Panc1 (cell line): ENCODE measurements at regions of chr4 and their contacts with region 1.

Region 1: DNA sequence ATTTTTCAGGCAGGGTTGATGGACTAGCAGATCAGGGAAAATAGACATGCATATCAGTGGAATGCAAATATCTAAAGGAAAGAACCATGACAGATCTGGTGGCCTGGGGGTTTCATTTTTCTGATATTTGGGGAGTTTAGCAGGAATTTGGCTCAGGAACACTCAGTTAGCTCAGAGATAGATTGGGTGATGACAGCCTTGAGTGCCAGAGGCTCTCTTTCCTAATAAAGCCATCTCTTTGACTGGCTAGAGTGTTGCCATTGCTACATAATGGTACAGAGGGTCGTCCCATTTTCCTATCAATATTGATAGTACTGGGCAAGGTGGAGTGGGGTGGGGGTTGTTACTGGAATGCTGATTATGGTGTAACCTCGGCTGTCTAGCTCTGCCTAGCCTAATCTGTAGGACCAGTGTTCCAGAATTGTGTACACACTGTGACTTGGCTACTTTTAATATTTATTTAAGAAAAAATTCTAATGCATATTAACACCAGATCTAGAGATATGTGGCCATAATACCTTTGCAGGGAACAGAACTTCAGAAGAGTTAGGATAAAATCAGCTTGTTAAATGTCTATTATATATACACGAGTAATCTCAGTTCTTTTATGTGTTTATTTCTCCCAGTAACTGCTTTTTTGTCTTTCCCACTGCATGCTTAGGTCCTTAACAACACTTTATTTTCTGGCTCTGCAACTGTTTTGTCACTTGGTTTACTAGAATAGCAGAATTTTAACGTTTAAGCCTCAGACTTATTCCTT is 145.0 kb upstream of the SPOCK3 start:
- DNase-seq: no peak
- ATAC-seq: no peak
- H3K4me3 ChIP-seq: no peak overlapping the region
- H3K27ac ChIP-seq: no peak overlapping the region
- H3K4me1 ChIP-seq: no peaks in the 10 kb centered on the region
- H3K27me3 ChIP-seq: no peaks in the 10 kb centered on the region
- CTCF ChIP-seq: no peak

Region 2: GRCh38 chr4:165744370-165744769 is 1634.9 kb before region 1 on chr4:
- CTCF ChIA-PET with region 1: interaction called, 12 read pairs
- POLR2A ChIA-PET with region 1: no interaction called
- in situ Hi-C with region 1: no loop called
- intact Hi-C with region 1: no loop called
- DNase-seq: no peak
- ATAC-seq: no peak
- H3K4me3 ChIP-seq: no peak overlapping the region
- H3K27ac ChIP-seq: no peak overlapping the region
- H3K4me1 ChIP-seq: no peaks in the 10 kb centered on the region
- H3K27me3 ChIP-seq: no peaks in the 10 kb centered on the region
- CTCF ChIP-seq: no peak

Region 3: GRCh38 chr4:167230744-167231143 is 148.5 kb before region 1 on chr4:
- CTCF ChIA-PET with region 1: no interaction called
- POLR2A ChIA-PET with region 1: no interaction called
- in situ Hi-C with region 1: no loop called
- intact Hi-C with region 1: no loop called
- DNase-seq: no peak
- ATAC-seq: no peak
- H3K4me3 ChIP-seq: no peak overlapping the region
- H3K27ac ChIP-seq: no peak overlapping the region
- H3K4me1 ChIP-seq: no peaks in the 10 kb centered on the region
- H3K27me3 ChIP-seq: peaks cover 3% of the 10 kb centered on the region; the same call in 1 of the 2 replicates
- CTCF ChIP-seq: no peak

Region 4: GRCh38 chr4:167274351-167274750 is 104.9 kb before region 1 on chr4:
- CTCF ChIA-PET with region 1: no interaction called
- POLR2A ChIA-PET with region 1: no interaction called
- in situ Hi-C with region 1: no loop called
- intact Hi-C with region 1: no loop called
- DNase-seq: peak; percentile 10
- ATAC-seq: no peak
- H3K4me3 ChIP-seq: no peak overlapping the region
- H3K27ac ChIP-seq: no peak overlapping the region
- H3K4me1 ChIP-seq: no peaks in the 10 kb centered on the region
- H3K27me3 ChIP-seq: no peaks in the 10 kb centered on the region
- CTCF ChIP-seq: no peak

Region 5: DNA sequence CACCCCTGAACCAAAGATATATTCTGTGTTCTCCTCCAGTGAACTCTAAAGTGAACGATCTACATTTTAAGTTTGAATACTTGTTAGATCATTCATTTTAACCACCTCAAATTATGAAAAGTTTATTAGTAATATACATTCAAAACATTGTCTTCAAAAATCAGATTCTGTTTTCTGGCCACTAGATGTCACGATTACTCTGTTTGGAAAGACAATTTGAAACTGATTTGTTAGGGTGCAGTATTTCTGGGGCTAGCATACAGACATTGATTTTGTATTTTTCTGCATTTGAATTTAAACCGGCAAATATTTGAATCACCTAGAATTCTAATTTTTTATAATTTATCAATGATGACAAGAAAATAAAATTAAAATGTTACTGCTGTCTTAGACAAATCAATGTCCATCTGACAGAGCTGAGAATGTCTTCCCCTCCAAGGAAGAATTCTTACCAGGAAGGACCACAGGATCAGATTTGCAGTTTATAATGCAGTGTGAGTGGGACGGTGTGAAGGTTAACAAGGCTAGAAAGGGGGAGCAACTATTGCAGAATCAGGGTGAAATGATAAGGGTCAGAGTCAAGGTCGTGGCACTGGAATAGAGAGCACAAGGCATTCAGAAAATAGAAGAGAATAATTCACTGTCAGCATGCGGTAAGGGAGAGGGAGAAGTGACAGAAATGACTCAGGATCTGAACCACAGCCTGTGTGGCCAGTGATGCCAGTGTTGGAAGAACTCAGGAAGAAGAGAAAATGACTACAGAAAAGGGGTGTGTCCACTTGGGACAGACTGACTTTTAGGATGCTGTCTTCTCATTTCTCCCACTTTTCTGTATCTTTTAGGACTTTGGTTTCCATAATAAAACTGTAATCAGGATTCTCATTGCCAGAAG is 804.7 kb after region 1 on chr4:
- CTCF ChIA-PET with region 1: no interaction called
- POLR2A ChIA-PET with region 1: no interaction called
- in situ Hi-C with region 1: no loop called
- intact Hi-C with region 1: no loop called
- DNase-seq: peak; percentile 24
- ATAC-seq: no peak
- H3K4me3 ChIP-seq: no peak overlapping the region
- H3K27ac ChIP-seq: no peak overlapping the region
- H3K4me1 ChIP-seq: no peaks in the 10 kb centered on the region
- H3K27me3 ChIP-seq: no peaks in the 10 kb centered on the region
- CTCF ChIP-seq: peak; percentile 64; the same call in 1 of the 2 replicates